ENCODE measurements at regions of chr13 and their contacts with region 1.

Region 1: GRCh38 chr13:112942689-112943308 is 26.2 kb upstream of the MCF2L start:
- DNase-seq: peak; percentile 91 to 93
- H3K4me3 ChIP-seq: peak overlapping the region; percentile 68; the same call in 1 of the 2 replicates
- H3K27ac ChIP-seq: no peak overlapping the region
- H3K4me1 ChIP-seq: 0 out of 2 replicates have a peak, but pooled peaks cover 3% of the 10 kb centered on the region
- H3K27me3 ChIP-seq: no peaks in the 10 kb centered on the region
- CTCF ChIP-seq: peak; percentile 98

Region 2: DNA sequence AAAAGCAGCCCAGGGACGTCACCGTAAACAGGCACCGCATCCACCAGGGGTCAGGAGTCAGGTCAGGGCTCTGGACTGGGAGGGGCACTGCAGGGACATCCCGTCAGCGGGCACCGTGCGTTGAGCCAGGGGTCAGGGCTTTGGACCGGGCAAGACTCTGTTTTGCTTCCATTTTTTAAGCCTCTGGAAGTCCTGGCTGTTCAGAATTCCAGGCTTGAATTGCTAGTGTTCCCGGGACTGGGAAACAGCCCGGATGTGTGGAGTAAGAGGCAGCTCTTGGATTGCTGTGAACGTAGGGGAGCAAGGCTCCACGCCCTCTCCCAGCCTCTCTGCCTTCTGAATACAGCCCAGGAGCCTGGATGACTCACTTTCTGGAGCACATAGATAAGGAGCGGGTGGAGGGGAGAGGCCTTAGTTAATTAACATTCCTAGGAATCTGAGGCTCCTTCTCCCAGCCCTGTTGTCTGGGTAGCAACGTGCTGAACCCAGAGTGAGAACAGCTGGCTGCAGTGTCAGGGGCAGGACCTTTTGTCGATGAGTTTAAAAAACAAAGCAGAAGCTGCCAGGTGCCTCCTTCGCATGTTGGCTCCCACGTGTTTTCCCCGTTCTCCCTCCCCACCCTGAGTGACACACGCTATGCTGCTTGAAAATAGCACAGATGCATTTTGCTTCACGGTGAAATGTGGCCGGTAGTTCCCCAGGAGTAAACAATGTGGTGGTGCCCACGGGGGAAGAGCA is 231.1 kb before region 1 on chr13:
- CTCF ChIA-PET with region 1: no interaction called
- POLR2A ChIA-PET with region 1: no interaction called
- intact Hi-C with region 1: no loop called
- DNase-seq: peak; percentile 85 to 97
- H3K4me3 ChIP-seq: peak overlapping the region; percentile 47
- H3K27ac ChIP-seq: peak overlapping the region; percentile 73
- H3K4me1 ChIP-seq: peaks cover 51% of the 10 kb centered on the region
- H3K27me3 ChIP-seq: no peaks in the 10 kb centered on the region
- CTCF ChIP-seq: peak; percentile 60

Region 3: DNA sequence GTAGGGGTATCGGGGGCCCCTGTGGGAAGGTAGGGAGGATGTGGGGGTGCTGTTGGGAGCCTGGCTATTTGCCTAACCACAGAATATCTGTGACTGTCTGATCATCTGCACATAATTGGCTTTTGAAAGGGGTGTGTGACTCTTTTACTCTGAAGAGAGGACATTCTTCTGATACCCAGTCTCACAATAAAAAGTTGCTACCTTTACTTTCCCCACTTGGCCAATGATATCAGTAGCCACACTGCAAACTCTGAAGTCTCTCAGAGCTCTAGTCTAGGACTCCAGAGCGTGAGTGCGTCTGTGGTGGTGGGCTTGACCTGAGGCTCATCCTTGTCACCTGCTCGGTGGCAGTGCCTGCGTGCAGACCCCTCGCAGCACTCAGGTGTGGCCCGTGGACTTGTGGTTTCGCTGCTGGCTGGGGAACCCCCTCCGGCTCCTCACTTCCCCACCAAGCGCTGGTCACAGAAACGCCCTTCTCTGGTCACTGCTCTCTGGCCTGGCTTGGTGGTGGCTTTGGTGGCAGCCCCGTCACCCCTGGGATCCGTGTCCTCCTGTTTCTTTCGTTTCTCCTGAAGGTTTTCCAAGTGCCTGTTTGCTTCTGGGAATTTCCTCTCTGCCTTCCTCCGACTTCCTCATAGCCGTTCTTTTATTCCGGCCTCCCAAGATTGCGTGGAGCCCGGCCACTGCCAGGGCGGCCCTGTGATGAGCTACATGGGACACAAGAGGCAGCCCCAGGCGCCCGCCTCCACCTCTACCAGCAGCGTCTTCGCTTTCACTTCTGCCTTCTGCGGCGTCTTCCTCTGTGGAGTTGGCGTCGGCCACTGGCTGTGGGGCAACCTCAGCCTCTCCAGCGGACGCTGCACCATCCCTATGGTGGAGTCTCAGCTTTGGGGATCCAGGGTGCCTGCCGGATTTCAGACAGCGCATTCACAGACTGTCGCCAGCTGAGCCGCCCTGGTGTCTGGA is 175.0 kb before region 1 on chr13:
- CTCF ChIA-PET with region 1: no interaction called
- POLR2A ChIA-PET with region 1: no interaction called
- intact Hi-C with region 1: no loop called
- DNase-seq: no peak
- H3K4me3 ChIP-seq: no peak overlapping the region
- H3K27ac ChIP-seq: no peak overlapping the region
- H3K4me1 ChIP-seq: 0 out of 2 replicates have a peak, but pooled peaks cover under 1% of the 10 kb centered on the region
- H3K27me3 ChIP-seq: no peaks in the 10 kb centered on the region
- CTCF ChIP-seq: no peak

Region 4: DNA sequence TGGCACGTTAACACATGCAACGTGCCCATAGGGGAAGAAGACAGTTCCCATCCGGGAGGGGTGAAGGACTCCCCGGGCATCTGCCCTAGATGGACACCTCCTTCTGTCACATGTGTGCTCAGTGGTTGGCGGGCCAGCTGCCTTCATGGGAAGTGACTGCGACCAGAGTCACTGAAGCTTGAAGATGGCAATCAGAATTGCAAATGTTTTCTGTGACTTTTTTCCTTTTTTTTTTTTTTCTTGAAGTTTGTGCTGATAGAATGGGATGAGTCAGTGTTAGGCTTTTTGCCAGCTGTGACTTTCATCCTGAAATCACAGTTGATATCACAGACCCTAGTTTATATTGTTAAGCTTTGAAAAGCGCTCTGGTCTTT is 83.0 kb before region 1 on chr13:
- CTCF ChIA-PET with region 1: no interaction called
- POLR2A ChIA-PET with region 1: interaction called, 26 read pairs
- intact Hi-C with region 1: no loop called
- DNase-seq: peak; percentile 15 to 52
- H3K4me3 ChIP-seq: no peak overlapping the region
- H3K27ac ChIP-seq: no peak overlapping the region
- H3K4me1 ChIP-seq: no peaks in the 10 kb centered on the region
- H3K27me3 ChIP-seq: no peaks in the 10 kb centered on the region
- CTCF ChIP-seq: no peak

Region 5: GRCh38 chr13:113001241-113002140 is 58.7 kb after region 1 on chr13:
- CTCF ChIA-PET with region 1: interaction called, 4 read pairs
- POLR2A ChIA-PET with region 1: no interaction called
- intact Hi-C with region 1: loop called (anchors 1 kb)
- DNase-seq: peak; percentile 90 to 91
- H3K4me3 ChIP-seq: peak overlapping the region; percentile 72
- H3K27ac ChIP-seq: peak overlapping the region; percentile 58
- H3K4me1 ChIP-seq: peaks cover 32% of the 10 kb centered on the region
- H3K27me3 ChIP-seq: no peaks in the 10 kb centered on the region
- CTCF ChIP-seq: no peak

Region 6: DNA sequence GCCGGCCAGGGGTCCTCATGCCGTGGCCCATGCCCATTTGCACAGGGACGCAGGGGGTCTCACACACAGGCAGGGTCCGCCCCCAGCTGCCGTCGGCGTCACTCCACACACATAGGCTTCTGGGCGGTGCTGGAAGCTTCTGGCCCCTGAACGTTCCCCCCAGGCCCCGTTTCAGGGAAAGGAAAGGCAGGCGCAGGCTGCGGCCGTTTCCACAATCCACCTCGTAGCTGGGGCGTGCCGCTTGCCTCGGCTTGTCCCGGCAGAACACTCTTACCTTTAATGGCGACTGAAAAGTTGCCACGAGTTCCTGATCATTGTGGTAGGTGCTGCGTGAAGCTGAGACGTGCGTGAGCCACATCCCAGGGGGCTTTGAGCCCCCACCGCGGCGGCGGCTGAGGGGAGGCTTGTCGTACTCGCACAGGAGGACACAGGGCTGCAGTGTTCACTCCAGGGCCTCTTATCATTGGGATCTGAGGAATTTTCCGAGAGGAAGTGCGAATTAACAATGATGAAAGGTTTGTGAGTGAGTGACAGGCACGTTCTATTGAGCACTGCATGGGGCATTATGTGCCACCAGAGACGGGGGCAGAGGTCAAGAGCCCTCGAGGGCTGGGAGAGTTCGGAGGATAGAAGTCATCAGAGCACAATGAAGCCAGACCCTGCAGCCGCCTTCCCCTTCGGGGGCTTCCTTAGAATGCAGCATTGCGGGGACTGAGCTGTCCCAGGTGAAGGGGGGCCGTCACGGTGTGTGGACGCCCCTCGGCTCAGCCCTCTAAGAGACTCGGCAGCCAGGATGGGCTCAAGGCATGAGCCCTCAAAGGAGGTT is 79.8 kb after region 1 on chr13:
- CTCF ChIA-PET with region 1: interaction called, 26 read pairs
- POLR2A ChIA-PET with region 1: no interaction called
- intact Hi-C with region 1: no loop called
- DNase-seq: peak; percentile 64 to 92
- H3K4me3 ChIP-seq: peak overlapping the region; percentile 68
- H3K27ac ChIP-seq: peak overlapping the region; percentile 72
- H3K4me1 ChIP-seq: peaks cover 33% of the 10 kb centered on the region
- H3K27me3 ChIP-seq: no peaks in the 10 kb centered on the region
- CTCF ChIP-seq: no peak

Region 7: GRCh38 chr13:113029487-113030258 is 86.9 kb after region 1 on chr13:
- CTCF ChIA-PET with region 1: interaction called, 4 read pairs
- POLR2A ChIA-PET with region 1: no interaction called
- intact Hi-C with region 1: loop called (anchors 1 kb)
- DNase-seq: peak in 1 of 2 experiments; percentile 64
- H3K4me3 ChIP-seq: no peak overlapping the region
- H3K27ac ChIP-seq: no peak overlapping the region
- H3K4me1 ChIP-seq: 0 out of 2 replicates have a peak, but pooled peaks cover 3% of the 10 kb centered on the region
- H3K27me3 ChIP-seq: no peaks in the 10 kb centered on the region
- CTCF ChIP-seq: peak; percentile 98

Region 8: GRCh38 chr13:113208424-113209335 is 265.9 kb after region 1 on chr13 and contains the start of gene PCID2:
- CTCF ChIA-PET with region 1: no interaction called
- POLR2A ChIA-PET with region 1: no interaction called
- intact Hi-C with region 1: loop called (anchors 5 kb)
- DNase-seq: peak; percentile 81 to 88
- H3K4me3 ChIP-seq: peak within 1 kb of the TSS; percentile 97
- H3K27ac ChIP-seq: peak within 1 kb of the TSS; percentile 90
- H3K4me1 ChIP-seq: peaks cover 40% of the 10 kb centered on the region
- H3K27me3 ChIP-seq: no peaks in the 10 kb centered on the region
- CTCF ChIP-seq: no peak
- total RNA-seq, gene PCID2: 48.3 and 71.8 TPM in 2 replicates

Measured in PC-9 (cell line).